K562 (cell line): ENCODE measurements at regions of chr9 and their contacts with region 1.

Region 1: GRCh38 chr9:73269430-73270101 is 117.9 kb downstream of the ANXA1 start:
- DNase-seq: peak in 2 of 4 experiments; percentile 7 to 37
- ATAC-seq: peak; percentile 66
- H3K4me3 ChIP-seq: no peak overlapping the region
- H3K27ac ChIP-seq: no peak overlapping the region
- H3K4me1 ChIP-seq: no peaks in the 10 kb centered on the region
- H3K27me3 ChIP-seq: no peaks in the 10 kb centered on the region
- CTCF ChIP-seq: peak; percentile 28 to 55 (median 38); a peak in 4 of 6 replicates
- EP300 ChIP-seq: no peak
- POLR2A ChIP-seq: no peak
- RAD21 ChIP-seq: peak; percentile 60 to 65

Region 2: GRCh38 chr9:73565833-73566465 is 296.4 kb after region 1 on chr9:
- CTCF ChIA-PET with region 1: interaction called, 3 read pairs
- POLR2A ChIA-PET with region 1: no interaction called
- in situ Hi-C with region 1: no loop called
- intact Hi-C with region 1: loop called (anchors 1 kb)
- DNase-seq: peak in 1 of 4 experiments; percentile 30
- ATAC-seq: no peak
- H3K4me3 ChIP-seq: no peak overlapping the region
- H3K27ac ChIP-seq: no peak overlapping the region
- H3K4me1 ChIP-seq: no peaks in the 10 kb centered on the region
- H3K27me3 ChIP-seq: no peaks in the 10 kb centered on the region
- CTCF ChIP-seq: peak; percentile 35 to 59 (median 43); a peak in 4 of 6 replicates
- EP300 ChIP-seq: no peak
- POLR2A ChIP-seq: no peak
- RAD21 ChIP-seq: peak; percentile 45 to 56